ENCODE measurements at regions of chrX and their contacts with region 1.

Region 1: DNA sequence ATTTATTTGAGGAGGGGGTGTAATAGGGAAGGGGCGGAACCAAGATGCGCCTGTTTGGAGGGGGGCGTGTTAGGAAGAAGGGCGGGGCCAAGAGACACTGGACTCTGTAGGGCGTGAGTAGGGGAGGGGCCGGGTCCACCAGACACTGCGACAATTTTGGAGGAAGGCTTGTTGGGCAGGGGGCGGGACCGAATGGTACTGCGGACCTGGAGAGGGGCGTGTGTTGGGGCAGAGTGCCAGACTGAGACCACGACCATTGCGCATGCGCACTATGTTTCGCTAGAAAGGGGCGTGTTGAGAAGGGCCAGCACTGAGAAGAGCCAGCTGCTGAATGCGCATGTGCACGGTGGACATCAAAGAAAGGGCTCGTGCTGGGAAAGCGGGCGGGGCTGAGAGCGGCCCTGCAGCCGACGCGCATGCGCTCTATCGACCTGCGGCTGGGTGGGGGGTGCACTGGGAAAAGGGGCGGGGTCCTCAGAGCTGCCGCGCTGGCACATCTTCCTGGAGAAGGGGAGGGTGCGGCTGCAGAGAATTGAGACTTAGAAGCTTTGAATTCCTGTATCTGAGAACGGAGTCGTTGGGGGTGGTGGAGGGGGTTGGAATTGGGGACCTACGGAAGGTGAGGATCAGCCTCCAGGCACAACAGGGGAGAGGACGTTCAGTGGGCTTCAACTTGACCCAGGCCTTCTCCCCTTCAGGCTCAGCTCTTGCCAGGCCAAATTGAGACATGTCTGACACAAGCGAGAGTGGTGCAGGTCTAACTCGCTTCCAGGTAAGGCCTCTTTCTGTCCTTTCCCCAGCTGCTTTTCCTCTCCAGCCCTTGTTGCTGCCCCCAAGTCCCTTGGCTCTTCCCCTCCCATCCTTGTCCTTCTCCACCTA is 1.3 kb downstream of the MAGED2 start:
- DNase-seq: peak; percentile 90
- H3K4me3 ChIP-seq: peak overlapping the region; percentile 63 to 81
- H3K27ac ChIP-seq: peak overlapping the region; percentile 89 to 95
- H3K4me1 ChIP-seq: peaks cover 0 to 11% of the 10 kb centered on the region in 2 experiments; a peak in 1 of 4 replicates
- H3K27me3 ChIP-seq: peaks cover 8% of the 10 kb centered on the region
- CTCF ChIP-seq: no peak
- EP300 ChIP-seq: no peak
- RAD21 ChIP-seq: no peak

Region 2: GRCh38 chrX:54639346-54640102 is 169.3 kb before region 1 on chrX:
- CTCF ChIA-PET with region 1: interaction called, 14 read pairs
- POLR2A ChIA-PET with region 1: interaction called, 33 read pairs
- DNase-seq: peak; percentile 76
- H3K4me3 ChIP-seq: peak overlapping the region; percentile 59 to 66
- H3K27ac ChIP-seq: peak overlapping the region; percentile 95 to 96
- H3K4me1 ChIP-seq: peaks cover 0 to 9% of the 10 kb centered on the region in 2 experiments; a peak in 2 of 4 replicates
- H3K27me3 ChIP-seq: no peaks in the 10 kb centered on the region
- CTCF ChIP-seq: peak; percentile 81
- EP300 ChIP-seq: no peak
- RAD21 ChIP-seq: peak; percentile 71

Region 3: DNA sequence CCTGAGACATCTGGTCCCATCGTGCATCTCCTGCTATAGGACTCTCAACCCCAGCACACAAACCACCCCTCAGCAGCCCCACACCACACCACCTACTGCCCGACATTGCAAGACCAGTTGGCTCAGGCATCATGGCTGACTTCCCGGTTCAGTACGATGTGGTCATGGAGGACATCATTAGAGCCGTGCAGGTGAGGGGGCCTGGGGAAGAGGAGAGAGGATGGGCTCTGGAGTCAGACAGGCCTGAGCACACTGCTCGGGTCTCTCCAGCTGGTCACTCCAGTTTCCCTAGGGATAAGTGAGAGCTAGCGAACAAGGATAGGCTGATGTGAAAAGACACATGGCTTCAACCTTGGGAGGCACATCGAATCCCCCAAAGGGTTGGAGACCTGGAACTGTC is 15.9 kb after region 1 on chrX:
- CTCF ChIA-PET with region 1: no interaction called
- POLR2A ChIA-PET with region 1: no interaction called
- DNase-seq: no peak
- H3K4me3 ChIP-seq: no peak overlapping the region
- H3K27ac ChIP-seq: no peak overlapping the region
- H3K4me1 ChIP-seq: no peaks in the 10 kb centered on the region
- H3K27me3 ChIP-seq: no peaks in the 10 kb centered on the region
- CTCF ChIP-seq: no peak
- EP300 ChIP-seq: no peak
- RAD21 ChIP-seq: no peak